Activated T-helper 1 cell treated with anti-CD3 and anti-CD28 coated beads, Interleukin-12 subunit alpha, Interleukin-12 subunit beta, Interleukin-2, Interleukin-4 antibody, amounts not matched to agents 30 ng/mL and 10 ng/mL and 1 ng/mL, durations not matched to agents 14 hours and 24 hours and 36 hours (primary cell): ENCODE measurements at regions of chr4 and their contacts with region 1.

Region 1: GRCh38 chr4:88027611-88028608 is 20.5 kb downstream of the PKD2 start:
- DNase-seq: no peak
- H3K4me3 Mint-ChIP-seq: no peak overlapping the region
- H3K27ac Mint-ChIP-seq: no peak overlapping the region
- H3K4me1 Mint-ChIP-seq: peaks cover 13% of the 10 kb centered on the region
- H3K27me3 Mint-ChIP-seq: no peaks in the 10 kb centered on the region

Region 2: DNA sequence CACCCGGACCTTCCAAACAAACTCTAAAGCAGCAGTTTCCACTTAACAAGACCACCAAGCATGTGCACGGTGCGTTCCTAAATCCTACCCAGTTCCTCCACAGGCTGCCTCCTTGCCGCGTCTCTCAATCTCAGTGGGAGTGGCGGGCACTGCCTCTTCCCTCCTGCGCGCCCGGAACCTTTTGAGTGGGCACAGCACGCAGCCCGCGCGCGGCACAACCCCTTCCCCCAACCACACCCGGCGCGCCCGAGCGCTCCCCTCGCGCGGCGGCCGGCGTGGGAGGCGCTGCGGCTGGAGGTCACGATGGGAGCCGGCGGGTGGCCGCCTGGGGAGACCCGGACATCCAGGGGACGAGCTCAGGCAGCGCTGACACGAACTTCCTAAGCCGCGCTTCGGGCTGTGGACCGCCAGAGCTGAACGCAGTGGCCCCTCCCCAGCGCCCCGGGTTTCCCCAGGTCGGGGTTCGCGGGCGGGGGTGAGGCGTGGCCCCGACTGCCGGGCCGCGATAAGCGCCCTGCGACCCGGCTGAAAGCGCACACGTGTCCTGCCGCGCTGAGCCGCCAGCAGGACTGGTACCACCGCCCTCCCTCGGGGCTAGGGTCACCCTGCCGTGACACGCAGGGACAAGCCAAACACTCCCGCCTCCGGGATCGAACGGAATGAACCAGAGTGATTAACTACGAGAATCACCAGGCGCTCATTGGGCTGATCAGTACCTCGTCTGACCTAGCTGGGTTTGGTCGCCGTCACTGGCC is 130.8 kb after region 1 on chr4 and contains the start of gene ABCG2:
- intact Hi-C with region 1: loop called (anchors 2 kb)
- DNase-seq: peak; percentile 46
- H3K4me3 Mint-ChIP-seq: peak within 1 kb of the TSS; percentile 80
- H3K27ac Mint-ChIP-seq: peak within 1 kb of the TSS; percentile 16
- H3K4me1 Mint-ChIP-seq: peaks cover 17% of the 10 kb centered on the region
- H3K27me3 Mint-ChIP-seq: peaks cover 18% of the 10 kb centered on the region
- total RNA-seq, gene ABCG2: 0.34 TPM in 2 replicates